MCF 10A (cell line): ENCODE measurements at regions of chr11 and their contacts with region 1.

Region 1: GRCh38 chr11:47233989-47234668 is 14.5 kb downstream of the ACP2 start:
- DNase-seq: peak; percentile 57
- H3K4me3 Mint-ChIP-seq: no peak overlapping the region
- H3K27ac Mint-ChIP-seq: peak overlapping the region; percentile 72
- H3K4me1 Mint-ChIP-seq: peaks cover 14% of the 10 kb centered on the region
- H3K27me3 Mint-ChIP-seq: no peaks in the 10 kb centered on the region
- CTCF ChIP-seq: no peak

Region 2: GRCh38 chr11:47004595-47005033 is 229.5 kb before region 1 on chr11:
- CTCF ChIA-PET with region 1: no interaction called
- POLR2A ChIA-PET with region 1: no interaction called
- intact Hi-C with region 1: no loop called
- DNase-seq: peak; percentile 61
- H3K4me3 Mint-ChIP-seq: no peak overlapping the region
- H3K27ac Mint-ChIP-seq: no peak overlapping the region
- H3K4me1 Mint-ChIP-seq: peaks cover 22% of the 10 kb centered on the region
- H3K27me3 Mint-ChIP-seq: no peaks in the 10 kb centered on the region
- CTCF ChIP-seq: no peak

Region 3: DNA sequence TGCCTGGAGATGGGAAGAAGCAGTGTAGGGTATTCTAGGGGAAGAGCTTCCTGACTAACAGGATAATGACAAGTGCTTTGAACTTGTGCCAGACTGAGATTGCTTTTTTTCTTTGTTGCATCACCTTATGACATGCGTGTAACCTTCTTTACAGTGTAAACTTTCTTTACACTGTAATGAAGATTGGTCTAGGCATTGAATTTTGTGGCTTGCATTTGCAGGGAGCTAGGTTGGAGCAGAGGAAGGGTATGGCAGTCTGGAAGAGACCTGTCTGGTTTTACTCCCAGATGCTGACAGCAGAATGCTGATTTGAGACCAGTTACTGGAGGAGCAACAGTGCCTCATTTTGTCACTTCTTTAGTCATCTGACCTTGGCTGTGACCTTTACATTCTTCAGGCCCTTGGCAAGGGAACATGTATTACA is 13.7 kb before region 1 on chr11:
- CTCF ChIA-PET with region 1: interaction called, 13 read pairs
- POLR2A ChIA-PET with region 1: interaction called, 32 read pairs
- intact Hi-C with region 1: no loop called
- DNase-seq: peak; percentile 80
- H3K4me3 Mint-ChIP-seq: peak overlapping the region; percentile 0
- H3K27ac Mint-ChIP-seq: peak overlapping the region; percentile 68
- H3K4me1 Mint-ChIP-seq: peaks cover 22% of the 10 kb centered on the region
- H3K27me3 Mint-ChIP-seq: no peaks in the 10 kb centered on the region
- CTCF ChIP-seq: no peak